ENCODE measurements at regions of chr3 and their contacts with region 1.

Region 1: DNA sequence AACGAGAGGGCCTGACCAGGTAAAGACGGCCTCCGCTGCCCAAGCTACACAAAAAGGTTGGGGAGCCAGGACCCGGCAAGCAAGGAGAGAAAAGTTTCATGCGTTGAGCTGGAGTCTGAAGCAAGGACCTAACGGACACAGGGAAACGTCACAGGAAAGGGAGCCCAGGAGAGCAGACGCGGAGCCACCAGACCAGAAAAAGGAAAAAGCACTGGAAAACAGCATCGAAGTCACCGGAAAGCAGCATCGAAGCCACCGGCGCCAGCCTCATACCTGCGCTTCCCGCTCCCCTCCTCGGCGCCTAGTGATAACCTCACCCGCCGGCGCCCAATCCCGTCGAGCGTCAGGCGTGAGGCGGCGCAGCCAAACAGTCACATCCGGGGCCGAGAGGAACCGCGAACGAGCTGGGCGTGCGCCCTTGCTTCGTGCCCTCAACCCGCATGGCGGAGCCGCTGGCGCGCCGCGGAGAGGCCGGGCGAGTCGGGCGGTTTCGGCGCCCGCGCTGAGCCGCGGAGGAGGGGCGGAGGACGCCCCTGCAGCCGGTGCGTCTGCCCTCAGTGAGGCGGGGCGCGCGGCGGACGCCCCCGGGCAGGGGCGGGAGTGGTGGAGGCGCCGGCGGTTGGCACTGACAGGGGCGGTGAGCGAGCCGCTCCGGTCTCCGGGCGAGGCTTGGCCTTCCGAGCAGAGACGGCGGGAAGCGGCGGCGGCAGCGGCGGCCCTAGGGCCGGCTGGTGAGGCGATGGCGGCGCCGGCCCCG is at the starts of genes FBXO45 and WDR53:
- DNase-seq: peak; percentile 92 to 96 (median 94)
- ATAC-seq: peak; percentile 94
- H3K4me3 ChIP-seq: peak within 1 kb of the TSS; percentile 87
- H3K27ac ChIP-seq: peak within 1 kb of the TSS; percentile 92
- H3K4me1 ChIP-seq: peaks cover 33 to 36% of the 10 kb centered on the region in 2 experiments
- H3K27me3 ChIP-seq: no peaks in the 10 kb centered on the region
- CTCF ChIP-seq: no peak
- EP300 ChIP-seq: peak; percentile 42; the same call in 1 of the 2 replicates
- POLR2A ChIP-seq: peak; percentile 94
- RAD21 ChIP-seq: no peak
- polyA plus RNA-seq, gene FBXO45: 15.2 to 17.2 TPM
- polyA plus RNA-seq, gene WDR53: 21.6 to 34.5 TPM

Region 2: DNA sequence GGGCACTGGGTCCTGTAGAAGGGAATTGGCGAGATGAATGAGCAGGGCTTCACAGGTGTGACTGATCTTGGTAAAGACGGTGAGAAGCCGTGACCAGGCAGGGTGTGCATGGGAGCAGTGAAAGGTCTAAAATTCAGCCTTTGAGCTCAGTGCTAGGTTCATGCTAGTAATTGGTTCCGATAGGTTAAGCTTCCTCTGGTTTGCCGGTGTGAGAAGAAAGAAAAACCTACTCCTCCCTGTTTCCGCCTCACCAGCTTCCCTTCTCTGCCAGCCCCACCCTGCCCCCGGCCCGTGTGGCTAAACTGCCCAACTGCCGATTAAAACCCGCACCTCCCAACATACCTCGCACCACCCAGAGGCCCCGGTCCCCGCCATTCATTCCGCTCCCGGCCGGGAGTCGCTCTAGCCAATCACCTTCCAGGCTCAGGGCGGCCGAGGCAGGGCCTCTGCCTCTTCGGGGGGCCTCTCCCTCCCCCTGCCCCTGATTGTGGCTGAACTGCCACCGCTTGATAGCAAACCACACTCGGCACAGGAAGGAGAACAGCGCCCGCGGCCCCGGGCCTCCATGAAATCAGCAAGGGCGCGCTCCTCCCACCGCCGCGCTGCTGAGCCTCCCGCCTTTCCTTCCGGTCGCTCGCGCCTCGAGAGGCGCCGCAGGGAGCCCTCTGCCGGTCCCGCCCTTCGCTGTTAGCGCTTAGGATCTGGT is 63.8 kb after region 1 on chr3:
- CTCF ChIA-PET with region 1: interaction called, 3 read pairs
- POLR2A ChIA-PET with region 1: interaction called, 4 read pairs
- in situ Hi-C with region 1: no loop called
- intact Hi-C with region 1: loop called (anchors 2 kb)
- DNase-seq: peak; percentile 95 to 97 (median 96)
- ATAC-seq: peak; percentile 93
- H3K4me3 ChIP-seq: peak overlapping the region; percentile 56
- H3K27ac ChIP-seq: peak overlapping the region; percentile 98
- H3K4me1 ChIP-seq: peaks cover 23 to 40% of the 10 kb centered on the region in 2 experiments
- H3K27me3 ChIP-seq: no peaks in the 10 kb centered on the region
- CTCF ChIP-seq: peak in 2 of 3 experiments; percentile 42 to 55; a peak in 4 of 6 replicates
- EP300 ChIP-seq: peak; percentile 67
- POLR2A ChIP-seq: peak; percentile 88
- RAD21 ChIP-seq: peak; percentile 6 to 13; a peak in 1 of 4 replicates